Posterior vena cava (tissue), 2 donors: ENCODE measurements at regions of chr3 and their contacts with region 1.

Region 1: DNA sequence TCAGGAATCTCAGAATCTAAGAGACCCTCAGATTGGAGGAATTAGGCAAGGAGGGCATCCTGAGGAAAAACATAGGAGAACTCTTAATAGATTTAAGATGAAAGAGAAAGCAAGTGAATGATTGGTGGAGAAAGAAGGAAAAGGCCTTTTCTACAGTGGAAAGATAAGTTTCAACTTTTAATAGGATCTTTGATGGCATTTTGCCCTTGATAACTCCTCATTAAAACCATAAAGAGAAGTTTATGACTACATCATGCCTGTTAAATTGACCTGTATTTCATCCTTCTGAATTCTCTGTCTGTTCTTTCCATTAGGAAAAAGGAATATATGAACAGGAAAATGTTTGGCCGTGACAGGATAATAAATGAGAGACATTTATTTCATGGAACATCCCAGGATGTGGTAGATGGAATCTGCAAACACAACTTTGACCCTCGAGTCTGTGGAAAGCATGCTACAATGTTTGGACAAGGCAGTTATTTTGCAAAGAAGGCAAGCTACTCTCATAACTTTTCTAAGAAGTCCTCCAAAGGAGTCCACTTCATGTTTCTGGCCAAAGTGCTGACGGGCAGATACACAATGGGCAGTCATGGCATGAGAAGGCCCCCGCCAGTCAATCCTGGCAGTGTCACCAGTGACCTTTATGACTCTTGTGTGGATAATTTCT is 30.1 kb downstream of the TIPARP start:
- DNase-seq: no peak

Region 2: GRCh38 chr3:156727519-156728205 is 23.2 kb after region 1 on chr3:
- intact Hi-C with region 1: no loop called
- DNase-seq: no peak

Region 3: DNA sequence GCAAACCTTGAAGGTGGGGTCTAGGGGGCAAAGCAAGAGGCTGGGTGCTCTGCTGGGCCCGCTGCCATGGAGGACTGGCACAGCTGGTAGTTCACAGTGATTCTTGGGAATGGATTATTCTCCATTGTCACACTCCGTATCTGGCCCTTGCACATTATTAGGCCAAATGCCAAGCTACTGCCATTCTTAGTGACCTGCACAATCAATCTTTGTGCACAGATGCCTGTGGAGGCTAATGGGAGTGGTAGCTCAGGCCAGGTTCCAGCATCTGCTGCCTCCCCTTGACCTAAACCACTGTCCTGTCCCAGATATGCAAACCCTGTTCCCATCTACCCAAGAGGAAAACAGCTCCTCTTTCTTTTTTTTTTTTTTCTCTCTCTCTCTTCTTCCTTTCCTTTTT is 37.4 kb after region 1 on chr3:
- intact Hi-C with region 1: loop called in 1 of 2 experiments (anchors 1 kb)
- DNase-seq: no peak